Dendritic cell treated with granulocyte-macrophage colony-stimulating factor and Interleukin-4, amounts not matched to agents 40 ng/mL and 50 ng/mL, for 4 days (primary cell): ENCODE measurements at regions of chr1 and their contacts with region 1.

Region 1: GRCh38 chr1:244451951-244452795 is 464 bp upstream of the ADSS2 start:
- H3K4me3 Mint-ChIP-seq: peak overlapping the region; percentile 95
- H3K27ac Mint-ChIP-seq: peak overlapping the region; percentile 94
- H3K4me1 Mint-ChIP-seq: peaks cover 29% of the 10 kb centered on the region
- H3K27me3 Mint-ChIP-seq: no peaks in the 10 kb centered on the region

Region 2: GRCh38 chr1:244970661-244971551 is 518.7 kb after region 1 on chr1:
- intact Hi-C with region 1: loop called (anchors 5 kb)
- H3K4me3 Mint-ChIP-seq: peak overlapping the region; percentile 87
- H3K27ac Mint-ChIP-seq: peak overlapping the region; percentile 99
- H3K4me1 Mint-ChIP-seq: peaks cover 17% of the 10 kb centered on the region
- H3K27me3 Mint-ChIP-seq: no peaks in the 10 kb centered on the region